Right cardiac atrium (tissue), 5 donors: ENCODE measurements at regions of chr4 and their contacts with region 1.

Region 1: GRCh38 chr4:81405894-81406401 is 65.8 kb downstream of the RASGEF1B start:
- DNase-seq: no peak
- ATAC-seq: peak; percentile 70 to 82
- H3K4me3 ChIP-seq: peak overlapping the region; percentile 26
- H3K27ac ChIP-seq: no peak overlapping the region
- H3K4me1 ChIP-seq: no peaks in the 10 kb centered on the region
- H3K27me3 ChIP-seq: no peaks in the 10 kb centered on the region

Region 2: GRCh38 chr4:81197864-81198524 is 208.0 kb before region 1 on chr4:
- intact Hi-C with region 1: no loop called
- DNase-seq: peak; percentile 23 to 69 (median 69)
- ATAC-seq: no peak
- H3K4me3 ChIP-seq: no peak overlapping the region
- H3K27ac ChIP-seq: no peak overlapping the region
- H3K4me1 ChIP-seq: peaks cover 1% of the 10 kb centered on the region
- H3K27me3 ChIP-seq: no peaks in the 10 kb centered on the region

Region 3: GRCh38 chr4:81527115-81527514 is 121.2 kb after region 1 on chr4:
- intact Hi-C with region 1: no loop called
- DNase-seq: peak; percentile 41 to 77 (median 74)
- ATAC-seq: peak; percentile 86 to 94
- H3K4me3 ChIP-seq: no peak overlapping the region
- H3K27ac ChIP-seq: no peak overlapping the region
- H3K4me1 ChIP-seq: no peaks in the 10 kb centered on the region
- H3K27me3 ChIP-seq: no peaks in the 10 kb centered on the region

Region 4: DNA sequence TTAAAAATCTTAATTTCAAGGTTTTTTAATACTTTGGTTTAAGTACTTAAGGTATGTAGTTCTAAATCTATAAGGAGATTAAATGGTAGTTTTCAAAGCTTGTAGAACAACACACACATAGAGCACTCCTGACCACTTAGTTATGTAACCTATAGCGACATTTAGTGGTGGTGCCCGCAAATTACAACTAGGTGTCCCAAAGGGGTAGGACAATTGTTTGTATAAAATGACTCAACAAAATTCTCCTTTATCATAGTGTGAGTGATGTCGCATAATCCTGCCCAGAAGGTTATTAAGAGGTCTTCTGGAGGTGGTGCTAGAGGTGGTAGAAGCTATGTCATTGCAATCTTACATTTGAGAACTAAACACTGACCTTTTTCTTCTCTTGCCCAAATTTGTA is 438.8 kb after region 1 on chr4:
- intact Hi-C with region 1: loop called in 1 of 4 experiments (anchors 10 kb)
- DNase-seq: peak; percentile 37 to 79 (median 71)
- ATAC-seq: peak; percentile 91 to 94
- H3K4me3 ChIP-seq: no peak overlapping the region
- H3K27ac ChIP-seq: no peak overlapping the region
- H3K4me1 ChIP-seq: no peaks in the 10 kb centered on the region
- H3K27me3 ChIP-seq: no peaks in the 10 kb centered on the region

Region 5: GRCh38 chr4:82201805-82202641 is 796.1 kb after region 1 on chr4:
- intact Hi-C with region 1: loop called in 2 of 4 experiments (anchors 5 to 10 kb)
- DNase-seq: peak in 1 of 3 donors; percentile 14
- ATAC-seq: peak in 1 of 2 donors; percentile 53
- H3K4me3 ChIP-seq: no peak overlapping the region
- H3K27ac ChIP-seq: no peak overlapping the region
- H3K4me1 ChIP-seq: no peaks in the 10 kb centered on the region
- H3K27me3 ChIP-seq: no peaks in the 10 kb centered on the region

Region 6: GRCh38 chr4:82268050-82268825 is 862.3 kb after region 1 on chr4:
- intact Hi-C with region 1: loop called (anchors 2 to 5 kb)
- DNase-seq: peak in 2 of 3 donors; percentile 52 to 67
- ATAC-seq: peak; percentile 96 to 97
- H3K4me3 ChIP-seq: no peak overlapping the region
- H3K27ac ChIP-seq: no peak overlapping the region
- H3K4me1 ChIP-seq: no peaks in the 10 kb centered on the region
- H3K27me3 ChIP-seq: no peaks in the 10 kb centered on the region